MCF 10A (cell line): ENCODE measurements at regions of chr22 and their contacts with region 1.

Region 1: GRCh38 chr22:30754971-30755756 is 60.5 kb downstream of the OSBP2 start:
- DNase-seq: peak; percentile 81
- H3K4me3 Mint-ChIP-seq: no peak overlapping the region
- H3K27ac Mint-ChIP-seq: no peak overlapping the region
- H3K4me1 Mint-ChIP-seq: peaks cover 5% of the 10 kb centered on the region
- H3K27me3 Mint-ChIP-seq: no peaks in the 10 kb centered on the region
- CTCF ChIP-seq: peak; percentile 70

Region 2: DNA sequence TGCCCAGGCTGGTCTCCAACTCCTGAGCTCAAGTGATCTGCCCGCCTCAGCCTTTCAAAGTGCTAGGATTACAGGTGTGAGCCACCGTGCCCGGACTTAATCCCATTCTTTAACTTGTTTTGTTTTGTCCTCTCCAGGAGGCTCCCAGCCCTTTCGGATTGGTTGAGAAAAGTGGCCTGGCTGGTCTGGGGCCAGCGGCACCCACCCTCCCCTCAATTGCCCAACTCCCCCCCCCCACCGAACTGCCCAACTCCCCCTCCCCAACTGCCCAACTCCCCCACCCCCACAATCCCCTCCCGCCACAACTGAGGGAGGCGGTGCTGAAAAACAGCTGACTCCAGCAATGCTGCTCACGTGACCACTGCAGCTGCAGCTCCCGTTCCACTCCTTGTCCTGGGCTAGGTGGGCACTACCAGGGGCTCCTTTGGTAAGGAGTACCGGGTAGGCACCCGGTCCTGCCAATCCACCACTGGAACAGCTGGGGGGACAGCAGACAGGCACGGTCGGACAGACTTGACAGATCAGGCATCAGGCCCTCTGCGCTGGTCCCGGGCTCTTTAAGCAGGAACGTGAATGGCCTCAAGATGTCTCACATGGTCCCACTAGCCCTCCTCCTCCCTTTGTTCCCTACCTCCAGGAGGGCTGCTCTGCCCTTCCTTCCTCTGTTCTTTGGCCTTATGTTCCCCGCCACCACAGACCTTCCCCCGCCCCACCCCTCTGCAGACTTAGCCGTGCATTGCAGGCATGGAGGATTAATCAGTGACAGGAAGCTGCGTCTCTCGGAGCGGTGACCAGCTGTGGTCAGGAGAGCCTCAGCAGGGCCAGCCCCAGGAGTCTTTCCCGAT is 148.5 kb before region 1 on chr22 and contains the start of gene TCN2:
- CTCF ChIA-PET with region 1: interaction called, 11 read pairs
- POLR2A ChIA-PET with region 1: interaction called, 3 read pairs
- intact Hi-C with region 1: no loop called
- DNase-seq: peak; percentile 35
- H3K4me3 Mint-ChIP-seq: peak within 1 kb of the TSS; percentile 80
- H3K27ac Mint-ChIP-seq: peak within 1 kb of the TSS; percentile 58
- H3K4me1 Mint-ChIP-seq: peaks cover 9% of the 10 kb centered on the region
- H3K27me3 Mint-ChIP-seq: no peaks in the 10 kb centered on the region
- CTCF ChIP-seq: no peak
- total RNA-seq, gene TCN2: 1.2 and 1.4 TPM in 2 replicates

Region 3: DNA sequence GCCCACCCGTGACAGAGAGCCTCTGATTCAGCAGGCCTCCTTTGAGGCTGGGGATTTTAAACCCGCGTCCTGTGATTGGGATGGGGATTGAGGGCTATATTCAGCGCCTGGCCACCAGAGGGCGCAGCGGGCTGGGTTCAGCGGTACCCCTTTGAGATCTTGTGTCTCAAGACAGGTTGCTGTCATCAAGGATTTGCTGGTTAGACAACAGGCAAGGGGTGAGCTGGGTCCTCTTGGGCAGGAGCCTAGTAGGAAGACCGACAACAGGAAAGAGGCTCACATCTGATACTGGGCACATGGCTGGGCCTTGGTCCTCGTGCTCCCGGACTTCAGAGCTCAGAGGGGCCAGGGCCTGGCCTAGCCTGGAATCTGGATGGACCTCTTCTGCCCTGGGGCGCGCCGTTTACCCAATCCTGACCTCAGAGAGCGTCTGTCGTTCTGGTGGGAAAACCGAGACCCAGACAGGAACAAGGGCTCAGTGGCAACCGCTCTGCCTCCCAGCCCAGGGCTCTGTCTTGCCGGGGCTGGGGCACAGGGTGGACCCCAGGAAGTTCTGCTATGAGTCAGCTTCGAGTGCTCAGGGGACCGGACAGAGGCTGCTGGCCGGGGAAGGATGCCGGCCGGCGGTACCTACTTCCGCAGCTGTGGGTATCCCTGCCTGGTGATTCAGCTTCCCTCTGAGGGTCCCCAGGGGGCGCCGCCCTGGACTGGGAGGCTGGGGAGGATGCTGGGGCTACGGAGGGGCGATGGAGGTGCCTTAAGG is 120.5 kb before region 1 on chr22:
- CTCF ChIA-PET with region 1: interaction called, 191 read pairs
- POLR2A ChIA-PET with region 1: interaction called, 21 read pairs
- intact Hi-C with region 1: loop called (anchors 1 kb)
- DNase-seq: peak; percentile 90
- H3K4me3 Mint-ChIP-seq: peak overlapping the region; percentile 70
- H3K27ac Mint-ChIP-seq: no peak overlapping the region
- H3K4me1 Mint-ChIP-seq: no peaks in the 10 kb centered on the region
- H3K27me3 Mint-ChIP-seq: no peaks in the 10 kb centered on the region
- CTCF ChIP-seq: peak; percentile 93

Region 4: DNA sequence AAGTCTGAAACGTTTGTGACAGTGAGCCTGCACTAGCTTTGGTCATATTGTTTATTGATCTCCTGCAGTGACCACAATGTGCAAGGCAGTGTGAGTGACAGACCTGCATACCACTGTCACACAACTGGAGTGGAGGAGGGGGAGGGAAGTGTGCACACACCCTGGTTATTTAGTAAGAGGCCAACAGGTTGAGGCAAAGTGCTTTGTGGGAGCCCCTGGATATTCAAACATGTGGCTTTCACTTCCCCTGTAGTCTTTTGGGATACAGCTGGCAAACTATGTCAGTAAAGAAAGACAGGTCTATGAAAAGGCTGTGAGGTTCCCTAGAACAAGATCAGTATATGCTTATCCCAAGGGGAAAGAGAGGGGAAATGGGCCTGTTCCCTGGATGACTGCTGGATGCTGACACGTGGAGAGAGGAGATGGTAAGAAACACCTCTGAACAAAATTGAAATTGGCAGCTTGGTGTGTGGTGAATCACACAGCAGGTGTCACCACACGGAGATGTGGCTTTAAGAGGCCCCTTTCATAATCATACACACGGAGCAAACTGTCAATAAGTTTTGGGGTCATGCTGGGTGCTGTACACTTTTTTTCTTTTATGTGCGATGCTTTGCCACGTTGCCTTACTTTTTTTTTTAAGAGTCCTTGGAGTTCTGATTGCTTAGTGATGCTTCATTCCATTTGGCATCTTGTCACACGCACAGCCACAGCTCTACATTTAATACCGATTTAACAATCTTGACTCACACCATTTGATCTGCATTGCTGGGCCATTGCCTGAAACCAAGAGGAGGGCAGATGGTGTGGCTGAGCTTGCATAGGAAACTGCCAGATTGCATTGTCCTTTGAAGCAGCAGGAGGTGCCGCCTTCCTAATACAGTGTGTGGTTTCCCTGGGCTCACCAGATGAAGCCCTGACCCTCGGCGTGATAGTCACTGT is 49.2 kb before region 1 on chr22:
- CTCF ChIA-PET with region 1: no interaction called
- POLR2A ChIA-PET with region 1: no interaction called
- intact Hi-C with region 1: no loop called
- DNase-seq: peak; percentile 21
- H3K4me3 Mint-ChIP-seq: no peak overlapping the region
- H3K27ac Mint-ChIP-seq: no peak overlapping the region
- H3K4me1 Mint-ChIP-seq: peaks cover 6% of the 10 kb centered on the region
- H3K27me3 Mint-ChIP-seq: no peaks in the 10 kb centered on the region
- CTCF ChIP-seq: no peak

Region 5: GRCh38 chr22:30744224-30744623 is 10.9 kb before region 1 on chr22:
- CTCF ChIA-PET with region 1: interaction called, 19 read pairs
- POLR2A ChIA-PET with region 1: interaction called, 3 read pairs
- intact Hi-C with region 1: no loop called
- DNase-seq: no peak
- H3K4me3 Mint-ChIP-seq: no peak overlapping the region
- H3K27ac Mint-ChIP-seq: no peak overlapping the region
- H3K4me1 Mint-ChIP-seq: peaks cover 5% of the 10 kb centered on the region
- H3K27me3 Mint-ChIP-seq: no peaks in the 10 kb centered on the region
- CTCF ChIP-seq: no peak

Region 6: DNA sequence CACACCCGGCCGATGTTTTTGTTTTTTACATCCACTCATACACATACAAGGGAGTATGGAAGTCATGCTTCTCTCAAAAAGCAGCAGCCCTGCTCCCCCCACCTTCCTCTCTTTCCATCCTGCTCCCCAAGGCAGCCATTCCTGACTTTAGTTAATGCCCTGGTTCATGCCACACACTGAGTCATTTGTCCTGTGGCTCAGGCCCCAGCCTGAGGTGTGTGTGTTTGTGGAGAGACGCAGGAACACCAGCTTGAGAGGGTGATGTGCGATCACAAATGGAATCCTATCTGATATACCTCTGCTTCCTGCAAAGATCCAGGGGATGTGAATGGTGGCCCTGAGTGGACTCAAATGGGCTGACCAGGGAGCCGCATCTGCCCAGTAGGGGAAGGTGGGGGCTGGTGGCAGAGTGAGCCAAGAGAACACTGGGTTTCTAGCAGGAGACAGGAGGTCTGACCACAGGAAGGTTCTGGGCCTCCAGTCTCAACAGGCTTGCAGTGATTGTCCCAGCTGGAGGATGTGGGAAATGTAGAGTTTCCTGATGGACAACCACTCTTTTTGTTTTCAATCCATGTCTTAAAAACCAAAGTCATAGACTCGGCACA is 26.2 kb after region 1 on chr22:
- CTCF ChIA-PET with region 1: no interaction called
- POLR2A ChIA-PET with region 1: no interaction called
- intact Hi-C with region 1: no loop called
- DNase-seq: peak; percentile 35
- H3K4me3 Mint-ChIP-seq: no peak overlapping the region
- H3K27ac Mint-ChIP-seq: peak overlapping the region; percentile 28
- H3K4me1 Mint-ChIP-seq: peaks cover 6% of the 10 kb centered on the region
- H3K27me3 Mint-ChIP-seq: no peaks in the 10 kb centered on the region
- CTCF ChIP-seq: no peak

Region 7: DNA sequence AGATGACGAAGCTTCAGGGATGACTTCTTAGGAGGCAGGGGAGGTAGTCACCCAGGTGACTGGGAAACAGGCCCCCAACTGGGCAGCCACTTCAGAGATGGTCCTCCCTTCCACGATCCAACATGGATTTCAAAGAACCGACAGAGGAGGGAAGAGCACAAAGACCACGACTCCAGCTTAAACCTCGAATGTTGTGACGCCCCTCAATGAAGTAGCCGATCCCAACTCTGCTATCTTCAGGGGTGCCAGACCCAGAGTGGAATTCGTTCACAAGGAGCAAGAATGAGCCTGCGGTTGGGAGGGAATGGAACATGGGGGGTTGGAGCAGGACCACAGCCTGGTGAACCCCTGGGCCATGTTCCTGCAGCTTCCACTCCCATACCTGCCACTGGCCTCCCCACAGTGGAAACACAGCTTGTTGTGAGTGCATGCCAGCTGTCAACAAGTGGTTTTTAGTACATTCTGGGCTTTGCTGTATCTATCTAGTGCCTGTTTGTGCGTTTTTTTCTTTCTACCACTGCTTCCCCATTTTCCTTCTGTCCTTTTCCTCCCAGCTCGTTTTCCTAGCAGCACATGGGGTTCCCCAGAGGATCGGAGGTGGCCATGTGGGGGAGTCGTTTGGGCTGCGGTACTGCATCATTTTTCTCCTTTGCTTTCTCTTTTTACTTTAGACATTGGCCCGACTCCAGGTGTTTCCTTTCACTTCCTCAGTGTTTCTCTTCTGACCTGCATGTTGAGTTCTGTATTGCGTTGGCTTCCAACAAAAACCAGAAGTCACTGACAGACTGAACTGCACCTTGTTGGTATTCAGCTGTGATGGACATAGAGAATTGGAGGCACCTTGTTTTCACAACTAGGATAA is 147.6 kb after region 1 on chr22:
- CTCF ChIA-PET with region 1: no interaction called
- POLR2A ChIA-PET with region 1: no interaction called
- intact Hi-C with region 1: no loop called
- DNase-seq: no peak
- H3K4me3 Mint-ChIP-seq: no peak overlapping the region
- H3K27ac Mint-ChIP-seq: no peak overlapping the region
- H3K4me1 Mint-ChIP-seq: no peaks in the 10 kb centered on the region
- H3K27me3 Mint-ChIP-seq: no peaks in the 10 kb centered on the region
- CTCF ChIP-seq: no peak